A673 (cell line): ENCODE measurements at regions of chr7 and their contacts with region 1.

Region 1: DNA sequence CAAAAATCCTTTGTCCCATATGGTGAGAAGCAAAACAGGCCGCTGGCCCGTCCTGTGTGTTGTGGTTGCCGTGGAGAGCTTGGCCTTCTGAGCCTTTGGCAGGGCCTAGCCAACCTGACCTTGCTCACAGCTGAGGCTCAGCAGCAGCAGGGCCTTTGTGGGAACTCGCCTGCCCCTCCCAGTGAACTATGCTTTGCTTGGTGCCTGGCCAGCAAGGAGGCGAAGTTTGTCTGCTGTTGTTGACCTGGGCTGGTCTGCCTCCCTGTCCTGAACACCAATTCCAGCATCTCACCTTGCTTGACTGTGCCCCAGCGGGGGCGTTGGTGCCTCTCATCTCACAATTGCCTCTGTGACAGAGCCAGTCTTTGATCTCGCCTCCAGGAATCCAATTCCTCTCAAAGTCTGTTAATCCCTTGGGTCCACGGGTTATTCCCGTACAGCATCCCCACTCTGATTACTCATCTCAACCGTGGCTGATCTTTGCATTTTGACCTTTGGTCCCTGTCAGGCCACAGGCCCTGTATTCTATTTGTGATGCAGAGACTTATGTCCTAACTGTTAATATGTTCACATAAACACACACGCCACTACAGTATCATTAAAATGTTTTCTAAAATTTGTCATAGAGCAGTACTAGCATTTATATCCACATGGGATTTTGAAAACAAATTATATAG is 22.6 kb downstream of the EPDR1 start:
- DNase-seq: no peak
- H3K4me3 ChIP-seq: no peak overlapping the region
- H3K27ac ChIP-seq: no peak overlapping the region
- H3K4me1 ChIP-seq: no peaks in the 10 kb centered on the region
- H3K27me3 ChIP-seq: no peaks in the 10 kb centered on the region
- CTCF ChIP-seq: no peak

Region 2: GRCh38 chr7:37894671-37895070 is 48.4 kb before region 1 on chr7:
- CTCF ChIA-PET with region 1: no interaction called
- POLR2A ChIA-PET with region 1: no interaction called
- intact Hi-C with region 1: no loop called
- DNase-seq: no peak
- H3K4me3 ChIP-seq: no peak overlapping the region
- H3K27ac ChIP-seq: no peak overlapping the region
- H3K4me1 ChIP-seq: no peaks in the 10 kb centered on the region
- H3K27me3 ChIP-seq: no peaks in the 10 kb centered on the region
- CTCF ChIP-seq: no peak

Region 3: GRCh38 chr7:38222481-38223096 is 279.5 kb after region 1 on chr7:
- CTCF ChIA-PET with region 1: no interaction called
- POLR2A ChIA-PET with region 1: interaction called, 10 read pairs
- intact Hi-C with region 1: no loop called
- DNase-seq: peak; percentile 63
- H3K4me3 ChIP-seq: no peak overlapping the region
- H3K27ac ChIP-seq: no peak overlapping the region
- H3K4me1 ChIP-seq: no peaks in the 10 kb centered on the region
- H3K27me3 ChIP-seq: no peaks in the 10 kb centered on the region
- CTCF ChIP-seq: peak; percentile 76